Breast epithelium (tissue), 4 donors: ENCODE measurements at regions of chr12 and their contacts with region 1.

Region 1: GRCh38 chr12:41745593-41745992 is 399.1 kb downstream of the GXYLT1 start:
- DNase-seq: no peak
- H3K4me3 ChIP-seq: no peak overlapping the region
- H3K27ac ChIP-seq: no peak overlapping the region
- H3K4me1 ChIP-seq: no peaks in the 10 kb centered on the region
- H3K27me3 ChIP-seq: no peaks in the 10 kb centered on the region
- CTCF ChIP-seq: no peak
- POLR2A ChIP-seq: no peak

Region 2: GRCh38 chr12:43621262-43621661 is 1875.7 kb after region 1 on chr12:
- intact Hi-C with region 1: loop called (anchors 5 kb)
- DNase-seq: no peak
- H3K4me3 ChIP-seq: no peak overlapping the region
- H3K27ac ChIP-seq: no peak overlapping the region
- H3K4me1 ChIP-seq: no peaks in the 10 kb centered on the region
- H3K27me3 ChIP-seq: no peaks in the 10 kb centered on the region
- CTCF ChIP-seq: no peak
- POLR2A ChIP-seq: no peak